GM12878 (cell line): ENCODE measurements at regions of chr20 and their contacts with region 1.

Region 1: DNA sequence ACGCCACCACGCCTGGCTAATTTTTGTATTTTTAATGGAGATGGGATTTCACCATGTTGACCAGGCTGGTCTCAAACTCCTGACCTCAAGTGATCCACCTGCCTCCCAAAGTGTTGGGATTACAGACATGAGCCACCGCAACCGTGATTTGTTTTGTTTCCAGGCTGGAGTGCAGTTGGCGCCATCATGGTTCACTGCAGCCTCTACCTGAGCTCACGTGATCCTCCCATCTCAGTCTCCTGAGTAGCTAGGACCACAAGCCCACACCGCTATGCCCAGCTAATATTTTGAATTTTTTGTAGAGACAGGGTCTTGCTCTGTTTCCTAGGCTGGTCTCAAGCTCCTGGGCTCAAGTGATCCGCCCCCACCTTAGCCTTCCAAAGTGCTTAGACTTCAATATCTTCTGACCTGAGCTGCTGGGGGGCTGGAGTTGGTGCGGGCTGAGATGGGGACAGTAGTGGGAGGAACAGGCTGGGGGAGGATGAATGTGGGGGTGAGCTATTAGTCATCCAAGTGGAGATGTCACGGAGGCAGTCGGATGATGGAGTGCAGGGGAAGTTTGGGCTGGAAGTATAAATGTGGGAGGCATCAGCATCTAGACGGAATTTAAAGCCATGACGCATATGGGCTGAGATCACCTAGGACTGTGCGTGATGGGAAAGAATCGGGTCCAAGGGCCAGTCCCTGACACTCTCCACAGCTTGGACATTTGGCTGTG is 23.1 kb upstream of the ZMYND8 start:
- DNase-seq: no peak
- ATAC-seq: no peak
- H3K4me3 ChIP-seq: no peak overlapping the region
- H3K27ac ChIP-seq: no peak overlapping the region
- H3K4me1 ChIP-seq: peaks cover 5% of the 10 kb centered on the region
- H3K27me3 ChIP-seq: no peaks in the 10 kb centered on the region
- CTCF ChIP-seq: no peak
- EP300 ChIP-seq: no peak
- POLR2A ChIP-seq: no peak
- RAD21 ChIP-seq: no peak

Region 2: GRCh38 chr20:46752728-46753127 is 626.9 kb before region 1 on chr20:
- CTCF ChIA-PET with region 1: interaction called, 18 read pairs
- POLR2A ChIA-PET with region 1: no interaction called
- RAD21 ChIA-PET with region 1: interaction called, 15 read pairs
- SMC1A ChIA-PET with region 1: interaction called, 9 read pairs
- in situ Hi-C with region 1: loop called (anchors 5 kb)
- intact Hi-C with region 1: no loop called
- DNase-seq: no peak
- ATAC-seq: peak; percentile 55
- H3K4me3 ChIP-seq: no peak overlapping the region
- H3K27ac ChIP-seq: no peak overlapping the region
- H3K4me1 ChIP-seq: no peaks in the 10 kb centered on the region
- H3K27me3 ChIP-seq: no peaks in the 10 kb centered on the region; a peak in 1 of 4 replicates
- CTCF ChIP-seq: peak; percentile 62 to 75 (median 71)
- EP300 ChIP-seq: no peak
- POLR2A ChIP-seq: no peak
- RAD21 ChIP-seq: peak; percentile 68

Region 3: DNA sequence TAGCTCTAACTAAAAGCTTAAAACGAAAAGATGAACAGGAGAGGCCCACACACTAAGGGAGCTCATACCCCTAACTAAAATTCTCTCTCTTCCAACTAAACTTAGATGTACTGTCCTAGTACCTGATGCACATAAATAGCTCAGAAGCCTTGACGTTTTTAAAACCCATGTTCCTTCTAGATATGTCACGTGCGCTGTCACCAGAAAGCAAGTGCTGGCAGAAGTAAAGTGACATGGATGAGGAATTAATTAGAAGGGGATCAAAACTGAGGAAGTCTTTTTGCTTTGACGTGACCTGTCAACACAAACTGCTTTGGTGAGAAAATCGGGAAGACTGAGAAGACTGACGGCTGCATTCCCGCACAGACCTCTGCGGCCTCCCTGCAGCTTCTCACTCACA is 165.6 kb before region 1 on chr20:
- CTCF ChIA-PET with region 1: interaction called, 27 read pairs
- POLR2A ChIA-PET with region 1: interaction called, 4 read pairs
- RAD21 ChIA-PET with region 1: interaction called, 9 read pairs
- SMC1A ChIA-PET with region 1: interaction called, 6 read pairs
- in situ Hi-C with region 1: no loop called
- intact Hi-C with region 1: no loop called
- DNase-seq: no peak
- ATAC-seq: no peak
- H3K4me3 ChIP-seq: no peak overlapping the region
- H3K27ac ChIP-seq: no peak overlapping the region
- H3K4me1 ChIP-seq: no peaks in the 10 kb centered on the region
- H3K27me3 ChIP-seq: no peaks in the 10 kb centered on the region
- CTCF ChIP-seq: no peak
- EP300 ChIP-seq: no peak
- POLR2A ChIP-seq: no peak
- RAD21 ChIP-seq: no peak

Region 4: GRCh38 chr20:47258745-47259695 is 120.6 kb before region 1 on chr20:
- CTCF ChIA-PET with region 1: interaction called, 25 read pairs
- POLR2A ChIA-PET with region 1: no interaction called
- RAD21 ChIA-PET with region 1: interaction called, 29 read pairs
- SMC1A ChIA-PET with region 1: interaction called, 23 read pairs
- in situ Hi-C with region 1: no loop called
- intact Hi-C with region 1: no loop called
- DNase-seq: peak; percentile 98
- ATAC-seq: peak; percentile 62
- H3K4me3 ChIP-seq: peak overlapping the region; percentile 3; the same call in 1 of the 2 replicates
- H3K27ac ChIP-seq: peak overlapping the region; percentile 86
- H3K4me1 ChIP-seq: peaks cover 58% of the 10 kb centered on the region
- H3K27me3 ChIP-seq: no peaks in the 10 kb centered on the region
- CTCF ChIP-seq: no peak
- EP300 ChIP-seq: peak in 1 of 2 experiments; percentile 90; a peak in 2 of 4 replicates
- POLR2A ChIP-seq: no peak; the same call in 1 of the 2 replicates
- RAD21 ChIP-seq: no peak

Region 5: GRCh38 chr20:47317127-47317895 is 62.3 kb before region 1 on chr20:
- CTCF ChIA-PET with region 1: interaction called, 11 read pairs
- POLR2A ChIA-PET with region 1: no interaction called
- RAD21 ChIA-PET with region 1: interaction called, 3 read pairs
- SMC1A ChIA-PET with region 1: interaction called, 5 read pairs
- in situ Hi-C with region 1: no loop called
- intact Hi-C with region 1: no loop called
- DNase-seq: no peak
- ATAC-seq: peak; percentile 50
- H3K4me3 ChIP-seq: no peak overlapping the region
- H3K27ac ChIP-seq: peak overlapping the region; percentile 54
- H3K4me1 ChIP-seq: peaks cover 28% of the 10 kb centered on the region
- H3K27me3 ChIP-seq: no peaks in the 10 kb centered on the region
- CTCF ChIP-seq: no peak
- EP300 ChIP-seq: no peak
- POLR2A ChIP-seq: no peak
- RAD21 ChIP-seq: no peak

Region 6: GRCh38 chr20:47392015-47392720 is 12.6 kb after region 1 on chr20:
- CTCF ChIA-PET with region 1: interaction called, 10 read pairs
- POLR2A ChIA-PET with region 1: no interaction called
- RAD21 ChIA-PET with region 1: interaction called, 6 read pairs
- SMC1A ChIA-PET with region 1: interaction called, 13 read pairs
- in situ Hi-C with region 1: no loop called
- intact Hi-C with region 1: no loop called
- DNase-seq: no peak
- ATAC-seq: peak; percentile 90
- H3K4me3 ChIP-seq: no peak overlapping the region
- H3K27ac ChIP-seq: peak overlapping the region; percentile 11
- H3K4me1 ChIP-seq: peaks cover 20% of the 10 kb centered on the region
- H3K27me3 ChIP-seq: no peaks in the 10 kb centered on the region
- CTCF ChIP-seq: no peak
- EP300 ChIP-seq: no peak
- POLR2A ChIP-seq: 0 out of 2 replicates have a peak, but pooled peaks have one; percentile 26
- RAD21 ChIP-seq: no peak

Region 7: DNA sequence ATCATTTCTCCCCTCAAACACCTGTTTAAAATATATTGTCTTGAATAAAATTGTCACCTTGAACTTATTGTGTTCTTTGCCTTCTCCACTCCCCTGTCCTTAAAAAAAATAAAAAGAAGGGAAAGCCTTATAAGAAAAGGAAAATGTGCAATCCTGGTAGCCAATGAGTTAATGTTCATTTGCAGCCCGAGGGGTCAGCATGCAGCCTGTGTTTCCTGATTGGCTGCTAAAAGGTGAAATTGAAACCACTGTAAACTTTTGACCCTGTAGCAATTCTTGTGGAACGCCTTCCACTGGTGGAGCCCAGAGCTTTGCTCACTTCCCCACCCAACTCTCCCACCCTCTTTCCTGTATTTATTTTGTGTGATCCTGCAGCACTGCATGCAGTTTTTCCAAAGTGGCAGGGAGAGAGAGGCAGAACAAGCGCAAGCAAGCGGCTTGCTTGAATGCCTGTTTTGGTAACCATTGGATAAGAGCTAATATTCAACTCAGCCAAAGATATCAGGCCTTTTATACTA is 197.0 kb after region 1 on chr20:
- CTCF ChIA-PET with region 1: interaction called, 8 read pairs
- POLR2A ChIA-PET with region 1: no interaction called
- RAD21 ChIA-PET with region 1: interaction called, 11 read pairs
- SMC1A ChIA-PET with region 1: interaction called, 3 read pairs
- in situ Hi-C with region 1: no loop called
- intact Hi-C with region 1: no loop called
- DNase-seq: peak; percentile 46
- ATAC-seq: peak; percentile 85
- H3K4me3 ChIP-seq: peak overlapping the region; percentile 45
- H3K27ac ChIP-seq: peak overlapping the region; percentile 74
- H3K4me1 ChIP-seq: peaks cover 52% of the 10 kb centered on the region
- H3K27me3 ChIP-seq: no peaks in the 10 kb centered on the region
- CTCF ChIP-seq: no peak
- EP300 ChIP-seq: no peak
- POLR2A ChIP-seq: no peak
- RAD21 ChIP-seq: no peak

Region 8: GRCh38 chr20:48002227-48002970 is 622.8 kb after region 1 on chr20:
- CTCF ChIA-PET with region 1: no interaction called
- POLR2A ChIA-PET with region 1: no interaction called
- RAD21 ChIA-PET with region 1: no interaction called
- SMC1A ChIA-PET with region 1: no interaction called
- in situ Hi-C with region 1: no loop called
- intact Hi-C with region 1: no loop called
- DNase-seq: peak; percentile 94
- ATAC-seq: peak; percentile 95
- H3K4me3 ChIP-seq: 0 out of 2 replicates have a peak overlapping the region, but pooled peaks have one; percentile 0
- H3K27ac ChIP-seq: peak overlapping the region; percentile 94
- H3K4me1 ChIP-seq: peaks cover 43% of the 10 kb centered on the region
- H3K27me3 ChIP-seq: no peaks in the 10 kb centered on the region
- CTCF ChIP-seq: no peak
- EP300 ChIP-seq: peak in 1 of 2 experiments; percentile 83; a peak in 1 of 4 replicates
- POLR2A ChIP-seq: no peak
- RAD21 ChIP-seq: peak; percentile 19; the same call in 1 of the 2 replicates